ENCODE measurements at regions of chr4 and their contacts with region 1.

Region 1: GRCh38 chr4:78864405-78865024 is 74.7 kb downstream of the PAQR3 start:
- DNase-seq: no peak
- H3K4me3 ChIP-seq: no peak overlapping the region
- H3K27ac ChIP-seq: no peak overlapping the region
- H3K4me1 ChIP-seq: no peaks in the 10 kb centered on the region
- H3K27me3 ChIP-seq: no peaks in the 10 kb centered on the region
- CTCF ChIP-seq: peak; percentile 61 to 85 (median 72)
- POLR2A ChIP-seq: no peak

Region 2: DNA sequence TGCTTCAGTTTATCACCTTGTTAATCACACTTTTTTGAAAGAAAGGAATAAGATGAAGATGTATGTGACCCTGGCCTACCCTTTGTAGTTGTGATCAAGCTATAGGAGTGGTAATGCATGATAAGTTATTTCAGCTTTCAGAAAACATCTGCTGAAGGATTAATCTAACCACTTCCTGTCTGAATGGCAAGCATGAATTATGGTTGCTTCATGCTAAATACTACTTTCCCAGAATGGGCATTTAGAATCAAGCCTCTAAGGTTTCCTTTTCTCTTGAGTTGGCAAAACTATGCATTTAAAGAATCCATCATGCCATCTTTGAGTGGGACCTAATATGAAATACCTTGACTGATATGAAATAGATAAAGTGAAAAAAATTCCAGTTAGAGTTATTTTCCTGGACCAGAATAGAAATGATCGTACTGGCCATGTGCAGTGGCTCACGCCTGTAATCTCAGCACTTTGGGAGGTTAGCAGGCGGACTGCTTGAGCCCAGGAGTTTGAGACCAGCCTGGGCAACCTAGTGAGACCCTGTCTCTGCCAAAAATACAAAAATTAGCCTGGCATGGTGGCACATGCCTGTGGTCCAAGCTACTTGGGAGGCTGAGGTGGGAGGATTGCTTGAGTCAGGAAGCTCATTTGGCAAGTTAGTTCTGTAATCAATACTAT is 253.8 kb before region 1 on chr4:
- intact Hi-C with region 1: loop called (anchors 2 kb)
- DNase-seq: no peak
- H3K4me3 ChIP-seq: no peak overlapping the region
- H3K27ac ChIP-seq: no peak overlapping the region
- H3K4me1 ChIP-seq: no peaks in the 10 kb centered on the region
- H3K27me3 ChIP-seq: no peaks in the 10 kb centered on the region
- CTCF ChIP-seq: no peak
- POLR2A ChIP-seq: no peak

Region 3: GRCh38 chr4:78876568-78877320 is 12.2 kb after region 1 on chr4:
- intact Hi-C with region 1: no loop called
- DNase-seq: no peak
- H3K4me3 ChIP-seq: no peak overlapping the region
- H3K27ac ChIP-seq: no peak overlapping the region
- H3K4me1 ChIP-seq: no peaks in the 10 kb centered on the region
- H3K27me3 ChIP-seq: no peaks in the 10 kb centered on the region
- CTCF ChIP-seq: no peak
- POLR2A ChIP-seq: no peak